Right cardiac atrium (tissue), 5 donors: ENCODE measurements at regions of chr20 and their contacts with region 1.

Region 1: GRCh38 chr20:1212607-1213396 is 9.5 kb downstream of the C20orf202 start:
- DNase-seq: peak; percentile 66 to 84 (median 78)
- ATAC-seq: peak; percentile 85 to 91
- H3K4me3 ChIP-seq: no peak overlapping the region
- H3K27ac ChIP-seq: no peak overlapping the region
- H3K4me1 ChIP-seq: no peaks in the 10 kb centered on the region
- H3K27me3 ChIP-seq: no peaks in the 10 kb centered on the region

Region 2: GRCh38 chr20:1108437-1108920 is 104.3 kb before region 1 on chr20:
- intact Hi-C with region 1: loop called in 1 of 4 experiments (anchors 10 kb)
- DNase-seq: peak; percentile 52 to 77 (median 77)
- ATAC-seq: peak; percentile 51 to 80
- H3K4me3 ChIP-seq: no peak overlapping the region
- H3K27ac ChIP-seq: no peak overlapping the region
- H3K4me1 ChIP-seq: no peaks in the 10 kb centered on the region
- H3K27me3 ChIP-seq: no peaks in the 10 kb centered on the region